ENCODE measurements at regions of chr6 and their contacts with region 1.

Region 1: GRCh38 chr6:152259234-152259633 is 377.9 kb downstream of the SYNE1 start:
- DNase-seq: no peak
- H3K4me3 ChIP-seq: no peak overlapping the region
- H3K27ac ChIP-seq: no peak overlapping the region
- H3K4me1 ChIP-seq: peaks cover 4 to 8% (median 5%) of the 10 kb centered on the region in 4 donors
- H3K27me3 ChIP-seq: no peaks in the 10 kb centered on the region
- CTCF ChIP-seq: no peak
- EP300 ChIP-seq: no peak
- POLR2A ChIP-seq: no peak

Region 2: GRCh38 chr6:152218880-152219279 is 40.4 kb before region 1 on chr6:
- intact Hi-C with region 1: loop called (anchors 5 kb)
- DNase-seq: no peak
- H3K4me3 ChIP-seq: no peak overlapping the region
- H3K27ac ChIP-seq: no peak overlapping the region
- H3K4me1 ChIP-seq: no peaks in the 10 kb centered on the region
- H3K27me3 ChIP-seq: no peaks in the 10 kb centered on the region
- CTCF ChIP-seq: no peak
- EP300 ChIP-seq: no peak
- POLR2A ChIP-seq: no peak

Measured in esophagus muscularis mucosa (tissue), 4 donors.